CD8-positive, alpha-beta memory T cell (primary cell): ENCODE measurements at regions of chr15 and their contacts with region 1.

Region 1: GRCh38 chr15:64476550-64476949 is 16.2 kb downstream of the ZNF609 start:
- DNase-seq: no peak
- H3K4me3 ChIP-seq: no peak overlapping the region
- H3K4me3 Mint-ChIP-seq: no peak overlapping the region
- H3K27ac ChIP-seq: no peak overlapping the region
- H3K27ac Mint-ChIP-seq: peak overlapping the region in 4 of 8 donors; percentile 18 to 85 (median 59)
- H3K4me1 ChIP-seq: peaks cover 12% of the 10 kb centered on the region
- H3K4me1 Mint-ChIP-seq: peaks cover 24 to 56% (median 41%) of the 10 kb centered on the region in 3 donors
- H3K27me3 ChIP-seq: no peaks in the 10 kb centered on the region
- H3K27me3 Mint-ChIP-seq: peaks cover 0 to 1% of the 10 kb centered on the region in 2 donors

Region 2: GRCh38 chr15:64460206-64460734 is 16.3 kb before region 1 on chr15 and contains the start of gene ZNF609:
- CTCF ChIA-PET with region 1: interaction called, 3 read pairs
- POLR2A ChIA-PET with region 1: interaction called, 11 read pairs
- DNase-seq: peak; percentile 78 to 89 (median 82)
- H3K4me3 ChIP-seq: peak within 1 kb of the TSS; percentile 69
- H3K4me3 Mint-ChIP-seq: peak within 1 kb of the TSS; percentile 92 to 97 (median 94)
- H3K27ac ChIP-seq: peak within 1 kb of the TSS; percentile 49
- H3K27ac Mint-ChIP-seq: peak within 1 kb of the TSS; percentile 85 to 95 (median 90)
- H3K4me1 ChIP-seq: peaks cover 69% of the 10 kb centered on the region
- H3K4me1 Mint-ChIP-seq: peaks cover 50 to 84% (median 67%) of the 10 kb centered on the region in 3 donors
- H3K27me3 ChIP-seq: no peaks in the 10 kb centered on the region
- H3K27me3 Mint-ChIP-seq: no peaks in the 10 kb centered on the region
- total RNA-seq, gene ZNF609: 38.0 to 38.9 TPM